ENCODE measurements at regions of chr20 and their contacts with region 1.

Region 1: DNA sequence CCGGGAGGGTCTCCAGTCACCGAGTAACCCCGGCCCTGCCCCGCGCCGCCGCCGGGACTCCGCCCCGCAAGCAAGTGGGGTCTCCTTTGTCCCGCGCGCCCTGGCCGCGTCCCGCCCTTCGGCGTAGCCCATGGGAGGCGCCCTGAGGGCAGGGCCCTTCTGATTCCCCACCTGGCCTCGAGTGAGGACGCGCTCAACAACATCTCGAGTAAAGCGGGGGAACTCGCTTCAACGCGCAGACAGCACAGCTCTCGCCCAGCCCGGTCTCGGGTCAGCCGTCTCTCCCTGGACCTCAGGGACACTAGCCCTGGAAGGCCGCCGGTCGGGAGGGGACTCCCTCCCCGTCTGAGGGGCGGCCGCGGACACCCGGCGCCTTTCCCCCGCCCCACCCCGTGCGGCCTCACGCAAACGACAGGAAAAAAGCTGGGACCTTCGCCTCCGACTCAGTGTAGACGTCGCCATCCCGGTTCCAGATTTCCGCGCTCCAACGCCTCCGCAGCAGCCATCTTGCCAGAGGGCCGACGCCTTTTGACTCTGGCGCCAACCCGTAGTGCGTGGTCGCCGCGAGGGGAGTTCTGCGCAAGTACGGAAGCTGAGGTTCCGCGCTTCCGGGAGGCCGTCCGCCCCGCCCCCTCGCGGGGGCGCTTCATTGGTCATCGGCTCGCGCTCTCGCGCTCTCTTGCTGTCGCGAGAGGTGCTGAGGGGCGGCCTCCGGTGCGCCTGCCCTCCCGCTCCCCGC is 412 bp upstream of the GID8 start:
- DNase-seq: peak; percentile 97
- ATAC-seq: peak; percentile 89
- H3K4me3 ChIP-seq: peak overlapping the region; percentile 99
- H3K27ac ChIP-seq: peak overlapping the region; percentile 84
- H3K4me1 ChIP-seq: peaks cover 26% of the 10 kb centered on the region
- H3K27me3 ChIP-seq: no peaks in the 10 kb centered on the region
- CTCF ChIP-seq: no peak

Region 2: DNA sequence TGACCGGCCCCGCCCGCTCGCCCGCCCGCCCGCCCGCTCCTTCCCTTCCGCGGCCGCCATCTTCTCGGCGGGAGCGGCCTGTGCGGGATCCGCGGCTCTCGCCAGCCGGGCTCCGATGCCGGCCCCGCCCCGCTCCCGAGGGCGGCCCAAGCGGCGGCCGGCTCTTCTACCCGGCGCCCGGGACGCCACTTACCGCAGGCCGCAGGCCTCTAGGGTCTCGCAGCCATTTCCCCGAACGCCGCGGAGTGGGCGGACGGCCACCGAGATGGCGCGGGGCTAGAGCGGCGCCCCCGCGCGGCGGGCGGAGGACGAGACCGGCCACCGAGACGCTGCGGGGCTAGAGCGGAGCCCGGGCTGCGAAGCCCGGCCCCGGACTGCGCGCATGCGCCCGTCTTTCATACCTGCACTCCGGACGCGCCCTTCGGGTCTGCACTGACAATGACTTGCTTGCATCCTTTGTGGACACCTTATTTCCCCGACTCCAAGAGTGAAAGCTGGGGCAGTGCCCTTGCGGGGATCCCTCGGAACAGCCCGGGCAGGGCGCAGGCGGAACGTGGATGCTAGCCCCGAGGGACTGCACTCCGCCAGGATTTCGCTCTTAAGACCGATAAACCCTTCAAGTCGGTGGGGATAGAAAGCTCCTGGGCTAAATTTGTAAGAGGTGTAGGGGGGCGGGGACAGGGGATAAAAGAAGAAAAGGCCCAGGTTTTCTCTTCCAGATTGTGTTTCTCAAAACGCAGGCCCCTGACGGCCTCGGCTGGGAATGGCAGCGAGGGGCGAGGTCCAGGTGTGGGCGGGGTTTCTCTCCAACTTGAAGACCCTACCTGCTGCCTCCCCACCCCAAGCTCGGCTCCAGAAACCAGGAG is 11.1 kb before region 1 on chr20 and contains the start of gene DIDO1:
- CTCF ChIA-PET with region 1: no interaction called
- POLR2A ChIA-PET with region 1: interaction called, 4 read pairs
- intact Hi-C with region 1: loop called (anchors 1 kb)
- DNase-seq: peak; percentile 91
- ATAC-seq: peak; percentile 75
- H3K4me3 ChIP-seq: peak within 1 kb of the TSS; percentile 80
- H3K27ac ChIP-seq: peak within 1 kb of the TSS; percentile 78
- H3K4me1 ChIP-seq: peaks cover 27% of the 10 kb centered on the region
- H3K27me3 ChIP-seq: no peaks in the 10 kb centered on the region
- CTCF ChIP-seq: peak; percentile 57
- total RNA-seq, gene DIDO1: 33.2 and 40.4 TPM in 2 replicates

Measured in PC-3 (cell line).